Activated B cell treated with CpG ODN at 0.5 μM for 24 hours (primary cell): ENCODE measurements at regions of chr15 and their contacts with region 1.

Region 1: GRCh38 chr15:31265871-31266711 is 60.5 kb upstream of the KLF13 start:
- DNase-seq: peak; percentile 62
- ATAC-seq: peak; percentile 59
- H3K4me3 Mint-ChIP-seq: peak overlapping the region; percentile 79
- H3K27ac Mint-ChIP-seq: peak overlapping the region; percentile 93
- H3K4me1 Mint-ChIP-seq: peaks cover 91% of the 10 kb centered on the region
- H3K27me3 Mint-ChIP-seq: no peaks in the 10 kb centered on the region
- CTCF ChIP-seq: no peak

Region 2: GRCh38 chr15:31236184-31237042 is 29.7 kb before region 1 on chr15:
- CTCF ChIA-PET with region 1: interaction called, 39 read pairs
- POLR2A ChIA-PET with region 1: interaction called, 380 read pairs
- intact Hi-C with region 1: loop called (anchors 1 kb)
- DNase-seq: no peak
- ATAC-seq: peak; percentile 13
- H3K4me3 Mint-ChIP-seq: no peak overlapping the region
- H3K27ac Mint-ChIP-seq: peak overlapping the region; percentile 59
- H3K4me1 Mint-ChIP-seq: peaks cover 70% of the 10 kb centered on the region
- H3K27me3 Mint-ChIP-seq: no peaks in the 10 kb centered on the region
- CTCF ChIP-seq: no peak

Region 3: GRCh38 chr15:31285772-31286261 is 19.7 kb after region 1 on chr15:
- CTCF ChIA-PET with region 1: interaction called, 3 read pairs
- POLR2A ChIA-PET with region 1: interaction called, 8 read pairs
- intact Hi-C with region 1: loop called (anchors 2 kb)
- DNase-seq: no peak
- ATAC-seq: peak; percentile 14
- H3K4me3 Mint-ChIP-seq: no peak overlapping the region
- H3K27ac Mint-ChIP-seq: no peak overlapping the region
- H3K4me1 Mint-ChIP-seq: peaks cover 12% of the 10 kb centered on the region
- H3K27me3 Mint-ChIP-seq: no peaks in the 10 kb centered on the region
- CTCF ChIP-seq: no peak

Region 4: GRCh38 chr15:31344823-31345605 is 78.9 kb after region 1 on chr15:
- CTCF ChIA-PET with region 1: no interaction called
- POLR2A ChIA-PET with region 1: interaction called, 19 read pairs
- intact Hi-C with region 1: no loop called
- DNase-seq: peak; percentile 41
- ATAC-seq: peak; percentile 67
- H3K4me3 Mint-ChIP-seq: peak overlapping the region; percentile 88
- H3K27ac Mint-ChIP-seq: peak overlapping the region; percentile 91
- H3K4me1 Mint-ChIP-seq: peaks cover 100% of the 10 kb centered on the region
- H3K27me3 Mint-ChIP-seq: no peaks in the 10 kb centered on the region
- CTCF ChIP-seq: no peak

Region 5: GRCh38 chr15:31458591-31459399 is 192.7 kb after region 1 on chr15:
- CTCF ChIA-PET with region 1: no interaction called
- POLR2A ChIA-PET with region 1: interaction called, 11 read pairs
- intact Hi-C with region 1: no loop called
- DNase-seq: no peak
- ATAC-seq: peak; percentile 98
- H3K4me3 Mint-ChIP-seq: peak overlapping the region; percentile 64
- H3K27ac Mint-ChIP-seq: peak overlapping the region; percentile 56
- H3K4me1 Mint-ChIP-seq: peaks cover 47% of the 10 kb centered on the region
- H3K27me3 Mint-ChIP-seq: no peaks in the 10 kb centered on the region
- CTCF ChIP-seq: no peak